Endothelial cell of umbilical vein (primary cell): ENCODE measurements at regions of chr7 and their contacts with region 1.

Region 1: DNA sequence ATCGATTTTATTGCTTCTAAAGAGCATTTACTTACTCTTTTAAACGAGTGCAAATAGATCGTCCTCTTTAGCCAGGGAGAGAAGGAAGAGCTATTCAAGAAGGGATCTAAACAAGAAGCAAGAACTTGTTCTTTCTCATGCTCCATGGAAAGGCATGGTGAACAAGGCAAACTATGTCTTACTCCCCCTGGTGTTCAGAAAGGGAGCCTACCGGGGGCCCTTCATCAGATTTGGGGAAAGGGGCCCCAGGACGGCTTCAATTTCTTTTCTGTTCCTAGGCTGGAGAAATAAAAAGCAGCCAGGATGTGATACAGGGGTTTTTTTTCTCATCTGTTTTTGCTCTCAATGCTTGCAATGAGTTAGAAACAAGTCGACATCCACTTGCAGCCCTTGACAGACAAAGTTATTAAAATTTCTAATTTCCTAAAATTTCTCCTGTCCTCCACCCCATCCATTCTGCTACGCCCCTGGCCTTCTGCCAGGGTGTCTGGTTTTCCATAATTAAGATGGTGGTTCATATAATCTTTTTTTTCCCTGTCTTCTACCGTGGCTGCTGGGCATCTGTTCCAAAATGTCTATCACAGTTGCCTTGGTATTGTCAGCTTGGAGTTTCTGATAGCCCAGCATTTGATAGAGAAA is 214.4 kb downstream of the CREB5 start:
- DNase-seq: peak; percentile 44
- H3K4me3 ChIP-seq: no peak overlapping the region
- H3K27ac ChIP-seq: no peak overlapping the region
- H3K4me1 ChIP-seq: peaks cover 3% of the 10 kb centered on the region
- H3K27me3 ChIP-seq: peaks cover 1 to 2% of the 10 kb centered on the region in 2 experiments
- CTCF ChIP-seq: peak; percentile 61 to 71
- POLR2A ChIP-seq: no peak

Region 2: GRCh38 chr7:28298870-28299518 is 327.7 kb before region 1 on chr7:
- CTCF ChIA-PET with region 1: interaction called, 7 read pairs
- POLR2A ChIA-PET with region 1: no interaction called
- dilution Hi-C with region 1: no loop called
- intact Hi-C with region 1: loop called (anchors 1 kb)
- DNase-seq: peak; percentile 53
- H3K4me3 ChIP-seq: no peak overlapping the region
- H3K27ac ChIP-seq: no peak overlapping the region
- H3K4me1 ChIP-seq: no peaks in the 10 kb centered on the region
- H3K27me3 ChIP-seq: no peaks in the 10 kb centered on the region
- CTCF ChIP-seq: peak; percentile 36 to 48
- POLR2A ChIP-seq: no peak

Region 3: GRCh38 chr7:28389504-28390395 is 237.0 kb before region 1 on chr7:
- CTCF ChIA-PET with region 1: interaction called, 13 read pairs
- POLR2A ChIA-PET with region 1: no interaction called
- dilution Hi-C with region 1: no loop called
- intact Hi-C with region 1: loop called (anchors 1 kb)
- DNase-seq: peak; percentile 76
- H3K4me3 ChIP-seq: peak overlapping the region in 2 of 3 experiments; percentile 1 to 54
- H3K27ac ChIP-seq: no peak overlapping the region
- H3K4me1 ChIP-seq: no peaks in the 10 kb centered on the region
- H3K27me3 ChIP-seq: peaks cover 10 to 13% of the 10 kb centered on the region in 2 experiments
- CTCF ChIP-seq: peak; percentile 39 to 41
- POLR2A ChIP-seq: no peak

Region 4: GRCh38 chr7:28473571-28474281 is 153.0 kb before region 1 on chr7:
- CTCF ChIA-PET with region 1: no interaction called
- POLR2A ChIA-PET with region 1: no interaction called
- dilution Hi-C with region 1: no loop called
- intact Hi-C with region 1: no loop called
- DNase-seq: no peak
- H3K4me3 ChIP-seq: no peak overlapping the region
- H3K27ac ChIP-seq: no peak overlapping the region
- H3K4me1 ChIP-seq: no peaks in the 10 kb centered on the region
- H3K27me3 ChIP-seq: peaks cover 3 to 4% of the 10 kb centered on the region in 2 experiments
- CTCF ChIP-seq: no peak
- POLR2A ChIP-seq: no peak

Region 5: DNA sequence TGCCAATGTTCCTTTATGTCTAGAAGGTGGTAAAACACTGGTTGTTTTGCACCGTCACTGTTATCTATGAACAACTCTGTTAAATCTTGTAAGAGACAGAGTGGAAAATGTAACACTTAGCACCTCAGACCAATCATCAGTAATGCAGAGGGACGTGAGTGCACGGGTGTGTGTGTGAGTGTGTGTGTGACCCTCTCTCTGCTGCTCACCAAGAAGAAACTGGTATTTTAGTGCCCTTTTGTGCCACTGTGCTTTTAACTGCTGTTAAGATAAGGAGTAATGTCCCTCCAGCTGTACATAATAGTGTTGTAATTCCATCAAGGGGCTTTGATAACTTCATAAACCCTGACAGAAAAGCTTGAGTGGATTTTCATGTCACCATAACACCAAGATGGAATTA is 84.3 kb before region 1 on chr7:
- CTCF ChIA-PET with region 1: no interaction called
- POLR2A ChIA-PET with region 1: no interaction called
- dilution Hi-C with region 1: no loop called
- intact Hi-C with region 1: no loop called
- DNase-seq: no peak
- H3K4me3 ChIP-seq: no peak overlapping the region
- H3K27ac ChIP-seq: no peak overlapping the region
- H3K4me1 ChIP-seq: no peaks in the 10 kb centered on the region
- H3K27me3 ChIP-seq: peaks cover 8 to 11% of the 10 kb centered on the region in 2 experiments
- CTCF ChIP-seq: no peak
- POLR2A ChIP-seq: no peak

Region 6: DNA sequence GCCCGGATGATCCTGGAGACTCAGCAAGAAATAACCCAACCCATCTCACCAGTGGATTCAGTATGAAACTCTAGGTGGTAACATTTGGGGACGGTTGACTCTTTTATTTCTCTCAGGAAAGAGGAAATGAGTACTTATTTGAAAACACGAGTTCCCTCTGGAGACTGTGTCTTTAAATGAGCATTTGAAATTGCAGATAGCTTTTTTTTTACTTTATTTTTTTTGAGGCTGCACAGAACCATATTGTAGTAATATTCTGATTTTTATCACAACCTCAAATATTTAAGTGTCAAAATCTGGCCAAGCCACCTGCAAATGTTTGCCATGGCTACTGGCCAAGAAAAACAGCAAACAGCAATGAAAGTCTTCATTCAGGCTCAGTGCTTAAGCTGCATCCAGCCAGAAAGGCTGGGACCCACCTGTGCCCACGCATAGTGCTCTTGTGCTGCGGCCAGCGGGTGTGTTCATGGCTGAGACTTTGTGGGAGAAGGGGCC is 53.6 kb before region 1 on chr7:
- CTCF ChIA-PET with region 1: interaction called, 3 read pairs
- POLR2A ChIA-PET with region 1: no interaction called
- dilution Hi-C with region 1: no loop called
- intact Hi-C with region 1: loop called (anchors 5 kb)
- DNase-seq: peak; percentile 79
- H3K4me3 ChIP-seq: no peak overlapping the region
- H3K27ac ChIP-seq: no peak overlapping the region
- H3K4me1 ChIP-seq: peaks cover 21% of the 10 kb centered on the region
- H3K27me3 ChIP-seq: peaks cover 4 to 10% of the 10 kb centered on the region in 2 experiments
- CTCF ChIP-seq: no peak
- POLR2A ChIP-seq: no peak

Region 7: DNA sequence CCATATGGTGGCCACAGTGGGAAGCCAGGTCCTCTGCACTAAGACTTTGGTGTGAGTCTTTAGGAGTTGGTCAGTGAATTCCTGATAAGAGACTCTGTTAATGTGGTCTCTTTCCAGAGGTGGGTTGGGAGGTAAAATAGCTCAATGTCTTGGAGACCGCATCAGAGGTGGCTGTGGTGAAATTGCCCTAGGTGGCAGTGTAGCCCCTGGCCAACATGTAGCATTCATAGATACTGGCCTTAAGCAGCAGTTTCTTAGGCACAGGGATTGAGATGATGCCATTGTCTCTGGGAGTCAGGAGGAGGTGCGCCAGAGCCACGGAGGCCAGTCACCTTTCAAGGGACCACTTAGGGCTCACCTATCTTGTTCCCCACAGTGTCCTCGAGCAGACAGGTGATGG is 11.7 kb before region 1 on chr7:
- CTCF ChIA-PET with region 1: interaction called, 13 read pairs
- POLR2A ChIA-PET with region 1: no interaction called
- dilution Hi-C with region 1: no loop called
- intact Hi-C with region 1: no loop called
- DNase-seq: peak; percentile 42
- H3K4me3 ChIP-seq: no peak overlapping the region
- H3K27ac ChIP-seq: no peak overlapping the region
- H3K4me1 ChIP-seq: no peaks in the 10 kb centered on the region
- H3K27me3 ChIP-seq: no peaks in the 10 kb centered on the region
- CTCF ChIP-seq: peak in 1 of 2 donors; percentile 45
- POLR2A ChIP-seq: no peak

Region 8: DNA sequence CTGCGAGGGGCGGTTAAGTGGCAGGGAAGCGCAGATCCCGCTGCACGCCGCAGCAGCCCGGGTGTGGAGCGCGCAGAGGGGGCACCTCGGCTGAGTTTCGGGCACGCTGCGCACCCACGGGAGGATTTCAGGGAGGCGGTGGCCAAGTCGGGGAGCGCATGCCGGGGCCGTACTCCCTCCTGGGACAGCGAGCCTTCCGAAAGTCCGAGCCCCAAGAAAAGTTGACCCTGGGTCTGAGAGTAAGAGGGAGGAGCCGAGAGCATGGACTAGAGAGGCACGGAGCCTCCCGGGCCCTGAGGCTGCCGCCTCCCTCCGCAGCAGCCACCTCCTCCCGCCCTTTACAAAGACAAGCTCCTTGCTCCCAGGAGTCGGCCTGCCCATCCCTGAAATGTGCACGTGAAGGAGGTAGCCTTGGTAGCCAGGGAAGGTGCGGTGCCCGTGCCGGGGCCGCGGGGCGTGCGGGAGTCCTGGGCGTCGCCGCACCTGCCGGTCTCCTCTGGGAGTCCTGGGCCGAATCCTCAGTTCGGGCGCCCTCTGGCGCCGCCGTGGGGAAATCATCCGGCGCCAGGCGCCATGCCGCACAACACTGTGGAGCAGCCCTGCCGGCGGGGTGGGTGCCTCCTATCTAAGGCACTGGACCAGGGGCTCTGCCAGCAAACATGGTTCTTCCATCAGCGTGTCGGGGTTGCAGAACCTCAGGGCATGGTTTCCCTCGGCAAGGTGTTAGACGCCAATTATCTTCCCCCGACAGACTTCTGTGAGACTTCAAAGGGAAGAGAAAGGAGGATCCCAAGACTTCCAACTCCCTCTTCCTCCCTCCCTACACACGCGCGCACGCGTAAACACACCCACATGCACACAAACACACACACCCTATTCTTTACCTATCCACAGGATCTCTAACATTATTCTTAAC is 227.3 kb after region 1 on chr7:
- CTCF ChIA-PET with region 1: interaction called, 7 read pairs
- POLR2A ChIA-PET with region 1: no interaction called
- dilution Hi-C with region 1: no loop called
- intact Hi-C with region 1: loop called (anchors 1 kb)
- DNase-seq: peak; percentile 72
- H3K4me3 ChIP-seq: peak overlapping the region; percentile 4 to 40 (median 28)
- H3K27ac ChIP-seq: no peak overlapping the region
- H3K4me1 ChIP-seq: peaks cover 5% of the 10 kb centered on the region
- H3K27me3 ChIP-seq: peaks cover 21 to 34% of the 10 kb centered on the region in 2 experiments
- CTCF ChIP-seq: peak; percentile 87 to 94
- POLR2A ChIP-seq: no peak